Endothelial cell of umbilical vein (primary cell): ENCODE measurements at regions of chr20 and their contacts with region 1.

Region 1: GRCh38 chr20:57748601-57749130 is 38.9 kb upstream of the PMEPA1 start:
- DNase-seq: peak; percentile 80
- H3K4me3 ChIP-seq: peak overlapping the region in 2 of 3 experiments; percentile 12 to 24
- H3K27ac ChIP-seq: peak overlapping the region; percentile 96
- H3K4me1 ChIP-seq: peaks cover 29% of the 10 kb centered on the region
- H3K27me3 ChIP-seq: no peaks in the 10 kb centered on the region
- CTCF ChIP-seq: no peak
- POLR2A ChIP-seq: no peak

Region 2: DNA sequence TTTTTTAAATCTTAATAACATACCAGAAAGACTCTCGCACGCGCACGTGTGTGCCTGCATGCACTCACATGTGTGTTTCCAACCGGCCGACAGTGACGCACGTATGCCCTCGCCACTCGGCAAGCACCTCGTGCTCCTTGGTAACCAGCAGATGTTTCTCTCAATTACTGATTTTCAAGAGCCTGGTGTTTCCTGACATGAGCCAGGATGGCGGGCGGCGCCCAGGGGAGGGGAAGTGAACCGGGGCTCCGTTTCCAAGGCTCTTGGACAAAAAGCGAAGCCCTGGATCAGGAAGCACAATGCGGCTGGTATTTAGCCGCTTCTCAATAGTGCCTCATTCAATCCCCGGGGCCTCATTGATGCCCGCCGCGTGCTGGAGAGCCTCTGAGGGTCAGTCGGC is 76.5 kb before region 1 on chr20:
- CTCF ChIA-PET with region 1: no interaction called
- POLR2A ChIA-PET with region 1: no interaction called
- dilution Hi-C with region 1: no loop called
- intact Hi-C with region 1: loop called (anchors 1 kb)
- DNase-seq: peak; percentile 86
- H3K4me3 ChIP-seq: no peak overlapping the region
- H3K27ac ChIP-seq: peak overlapping the region; percentile 61
- H3K4me1 ChIP-seq: peaks cover 7% of the 10 kb centered on the region
- H3K27me3 ChIP-seq: no peaks in the 10 kb centered on the region
- CTCF ChIP-seq: no peak
- POLR2A ChIP-seq: no peak

Region 3: GRCh38 chr20:57709931-57710799 is 38.5 kb before region 1 on chr20 and contains the start of gene PMEPA1:
- CTCF ChIA-PET with region 1: interaction called, 7 read pairs
- POLR2A ChIA-PET with region 1: interaction called, 5 read pairs
- dilution Hi-C with region 1: no loop called
- intact Hi-C with region 1: loop called (anchors 1 kb)
- DNase-seq: peak; percentile 96
- H3K4me3 ChIP-seq: peak within 1 kb of the TSS; percentile 79 to 88 (median 81)
- H3K27ac ChIP-seq: peak within 1 kb of the TSS; percentile 83
- H3K4me1 ChIP-seq: peaks cover 14% of the 10 kb centered on the region
- H3K27me3 ChIP-seq: no peaks in the 10 kb centered on the region
- CTCF ChIP-seq: peak in 1 of 2 donors; percentile 15
- POLR2A ChIP-seq: no peak
- total RNA-seq, gene PMEPA1: 31.6 and 47.1 TPM in 2 replicates

Region 4: GRCh38 chr20:57724619-57725405 is 23.9 kb before region 1 on chr20:
- CTCF ChIA-PET with region 1: no interaction called
- POLR2A ChIA-PET with region 1: no interaction called
- dilution Hi-C with region 1: no loop called
- intact Hi-C with region 1: no loop called
- DNase-seq: no peak
- H3K4me3 ChIP-seq: no peak overlapping the region
- H3K27ac ChIP-seq: no peak overlapping the region
- H3K4me1 ChIP-seq: no peaks in the 10 kb centered on the region
- H3K27me3 ChIP-seq: peaks cover 6 to 33% of the 10 kb centered on the region in 2 experiments
- CTCF ChIP-seq: no peak
- POLR2A ChIP-seq: no peak

Region 5: GRCh38 chr20:57769756-57770155 is 21.1 kb after region 1 on chr20:
- CTCF ChIA-PET with region 1: interaction called, 4 read pairs
- POLR2A ChIA-PET with region 1: no interaction called
- dilution Hi-C with region 1: no loop called
- intact Hi-C with region 1: loop called (anchors 1 kb)
- DNase-seq: peak; percentile 61
- H3K4me3 ChIP-seq: no peak overlapping the region
- H3K27ac ChIP-seq: peak overlapping the region; percentile 62
- H3K4me1 ChIP-seq: peaks cover 44% of the 10 kb centered on the region
- H3K27me3 ChIP-seq: no peaks in the 10 kb centered on the region
- CTCF ChIP-seq: no peak
- POLR2A ChIP-seq: no peak